PC-9 (cell line): ENCODE measurements at regions of chr7 and their contacts with region 1.

Region 1: GRCh38 chr7:34849163-34849960 is 187.9 kb downstream of the DPY19L1 start:
- DNase-seq: peak in 1 of 2 experiments; percentile 25
- H3K4me3 ChIP-seq: no peak overlapping the region
- H3K27ac ChIP-seq: no peak overlapping the region
- H3K4me1 ChIP-seq: peaks cover 17% of the 10 kb centered on the region
- H3K27me3 ChIP-seq: no peaks in the 10 kb centered on the region
- CTCF ChIP-seq: no peak

Region 2: GRCh38 chr7:34837801-34838201 is 11.6 kb before region 1 on chr7:
- CTCF ChIA-PET with region 1: interaction called, 3 read pairs
- POLR2A ChIA-PET with region 1: no interaction called
- intact Hi-C with region 1: loop called (anchors 1 kb)
- DNase-seq: peak in 1 of 2 experiments; percentile 31
- H3K4me3 ChIP-seq: no peak overlapping the region
- H3K27ac ChIP-seq: no peak overlapping the region
- H3K4me1 ChIP-seq: peaks cover 26% of the 10 kb centered on the region
- H3K27me3 ChIP-seq: no peaks in the 10 kb centered on the region
- CTCF ChIP-seq: no peak